GM13976 (cell line): ENCODE measurements at regions of chr19 and their contacts with region 1.

Region 1: GRCh38 chr19:39671738-39672363 is 16.1 kb downstream of the LGALS16 start:
- DNase-seq: peak; percentile 30
- CTCF ChIP-seq: peak; percentile 57

Region 2: DNA sequence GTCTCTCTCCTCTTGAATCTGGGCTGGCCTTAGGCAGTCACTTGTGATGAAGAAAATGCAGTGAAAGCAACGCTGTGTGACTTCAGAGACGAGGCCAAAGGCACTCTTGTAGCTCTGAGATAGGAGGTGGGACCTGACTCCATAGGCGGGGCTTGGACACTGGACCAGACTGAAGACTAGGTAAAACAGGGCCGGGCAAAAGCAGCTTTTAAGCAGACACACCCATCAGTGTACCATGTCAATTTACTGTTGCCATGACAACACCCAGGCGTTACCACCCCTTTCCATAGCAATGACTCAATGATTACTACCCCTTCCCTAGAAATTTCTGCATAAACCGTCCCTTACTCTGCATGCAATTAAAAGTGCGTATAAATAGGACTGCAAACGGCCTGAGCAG is 125.3 kb before region 1 on chr19:
- in situ Hi-C with region 1: loop called (anchors 5 kb)
- DNase-seq: no peak
- CTCF ChIP-seq: no peak

Region 3: DNA sequence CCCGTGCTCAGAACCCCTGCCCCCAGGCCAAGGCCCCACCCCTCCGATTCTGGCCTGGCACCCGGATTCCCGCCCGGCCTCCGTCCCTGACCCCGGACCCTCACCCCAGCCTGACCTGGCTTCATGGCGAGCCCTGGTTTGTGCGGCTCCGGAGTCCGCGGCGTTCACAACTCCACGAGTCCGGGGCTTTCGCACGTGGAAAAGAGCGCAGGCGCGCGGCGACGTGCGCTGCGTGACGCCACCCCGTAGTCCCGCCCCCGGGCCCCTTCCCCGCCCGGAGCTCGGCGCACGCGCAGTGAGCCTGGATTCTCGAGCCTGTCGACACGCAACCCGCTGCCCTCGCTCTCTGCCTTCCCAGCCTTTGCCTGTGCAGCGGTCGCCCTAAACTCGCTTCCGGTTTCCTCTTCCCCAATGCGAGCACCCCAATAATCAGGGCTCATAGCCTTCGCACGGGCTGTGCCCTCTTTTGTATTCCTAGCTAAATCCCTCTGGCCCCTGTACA is 174.4 kb after region 1 on chr19 and contains the start of gene FBL:
- in situ Hi-C with region 1: loop called (anchors 10 kb)
- DNase-seq: peak; percentile 99
- CTCF ChIP-seq: no peak

Region 4: GRCh38 chr19:39970675-39971379 is 299.0 kb after region 1 on chr19 and contains the start of gene PSMC4:
- in situ Hi-C with region 1: no loop called
- DNase-seq: peak; percentile 98
- CTCF ChIP-seq: peak; percentile 93

Region 5: GRCh38 chr19:40425450-40426287 is 753.8 kb after region 1 on chr19 and contains the start of gene SERTAD1:
- in situ Hi-C with region 1: no loop called
- DNase-seq: peak; percentile 99
- CTCF ChIP-seq: peak; percentile 48